Heart right ventricle (tissue), 16 donors: ENCODE measurements at regions of chr7 and their contacts with region 1.

Region 1: GRCh38 chr7:66654123-66654732 is 25.5 kb downstream of the KCTD7 start:
- DNase-seq: peak; percentile 98
- ATAC-seq: peak; percentile 97 to 99 (median 98)
- H3K4me3 ChIP-seq: peak overlapping the region; percentile 60 to 90 (median 82)
- H3K27ac ChIP-seq: peak overlapping the region; percentile 92 to 100 (median 98)
- H3K4me1 ChIP-seq: peaks cover 0 to 26% (median 20%) of the 10 kb centered on the region in 9 donors
- H3K27me3 ChIP-seq: no peaks in the 10 kb centered on the region
- CTCF ChIP-seq: peak in 6 of 9 donors; percentile 24 to 56 (median 40)

Region 2: GRCh38 chr7:66522518-66522917 is 131.7 kb before region 1 on chr7:
- intact Hi-C with region 1: no loop called
- DNase-seq: no peak
- ATAC-seq: peak in 6 of 8 donors; percentile 28 to 63 (median 44)
- H3K4me3 ChIP-seq: no peak overlapping the region
- H3K27ac ChIP-seq: no peak overlapping the region
- H3K4me1 ChIP-seq: no peaks in the 10 kb centered on the region
- H3K27me3 ChIP-seq: no peaks in the 10 kb centered on the region
- CTCF ChIP-seq: peak in 6 of 9 donors; percentile 16 to 31 (median 28)

Region 3: DNA sequence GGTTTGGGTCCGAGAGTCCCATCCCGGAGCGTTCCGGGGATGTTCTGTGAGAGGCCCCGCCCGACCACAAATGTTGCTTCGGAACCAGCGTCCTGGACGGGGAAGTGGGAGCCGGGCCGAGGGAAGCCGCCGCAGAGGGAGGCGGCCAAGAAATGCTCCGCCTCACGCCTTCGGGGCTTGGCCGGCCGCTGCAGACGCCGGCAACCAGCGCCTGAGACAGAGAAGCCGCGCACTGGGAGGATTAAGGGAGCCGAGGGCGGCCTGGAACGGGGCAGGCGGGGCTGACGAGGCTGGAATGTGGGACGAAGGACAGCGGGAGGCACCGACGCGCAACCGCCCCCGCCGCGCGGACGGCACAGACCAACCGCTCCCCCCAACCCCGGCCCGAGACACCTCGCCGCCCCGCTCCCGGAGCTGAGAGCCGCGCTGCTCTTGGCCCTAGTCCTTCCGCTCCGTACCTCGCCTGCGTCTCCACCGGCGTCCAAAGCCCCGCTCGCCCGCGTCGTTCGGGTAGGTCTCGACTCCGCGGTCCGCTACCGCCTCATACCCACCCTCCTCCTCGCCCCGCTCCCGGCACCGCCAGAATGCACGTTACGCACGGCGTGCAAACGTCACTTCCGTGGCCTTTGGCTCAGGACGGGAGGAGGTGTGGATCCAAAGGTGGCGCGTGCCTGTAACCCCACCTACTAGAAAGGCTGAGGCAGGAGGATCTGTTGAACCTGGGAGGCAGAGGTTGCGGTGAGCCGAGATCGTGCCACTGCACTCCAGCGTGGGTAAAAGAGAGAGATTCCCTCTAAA is 62.2 kb before region 1 on chr7:
- intact Hi-C with region 1: loop called in 1 of 10 experiments (anchors 10 kb)
- DNase-seq: peak; percentile 90 to 91
- ATAC-seq: peak; percentile 97 to 98 (median 98)
- H3K4me3 ChIP-seq: peak overlapping the region; percentile 68 to 98 (median 88)
- H3K27ac ChIP-seq: peak overlapping the region; percentile 84 to 97 (median 93)
- H3K4me1 ChIP-seq: peaks cover 0 to 47% (median 31%) of the 10 kb centered on the region in 9 donors
- H3K27me3 ChIP-seq: no peaks in the 10 kb centered on the region
- CTCF ChIP-seq: no peak

Region 4: GRCh38 chr7:66628361-66629140 is 25.7 kb before region 1 on chr7 and contains the start of gene KCTD7:
- intact Hi-C with region 1: loop called in 2 of 10 experiments (anchors 2 kb)
- DNase-seq: peak; percentile 98 to 99
- ATAC-seq: peak; percentile 95 to 98 (median 96)
- H3K4me3 ChIP-seq: peak within 1 kb of the TSS; percentile 49 to 95 (median 80)
- H3K27ac ChIP-seq: peak within 1 kb of the TSS; percentile 90 to 98 (median 96)
- H3K4me1 ChIP-seq: peaks cover 0 to 40% (median 19%) of the 10 kb centered on the region in 9 donors
- H3K27me3 ChIP-seq: no peaks in the 10 kb centered on the region
- CTCF ChIP-seq: no peak
- total RNA-seq, gene KCTD7: 7.3 to 13.6 (median 9.1) TPM

Region 5: DNA sequence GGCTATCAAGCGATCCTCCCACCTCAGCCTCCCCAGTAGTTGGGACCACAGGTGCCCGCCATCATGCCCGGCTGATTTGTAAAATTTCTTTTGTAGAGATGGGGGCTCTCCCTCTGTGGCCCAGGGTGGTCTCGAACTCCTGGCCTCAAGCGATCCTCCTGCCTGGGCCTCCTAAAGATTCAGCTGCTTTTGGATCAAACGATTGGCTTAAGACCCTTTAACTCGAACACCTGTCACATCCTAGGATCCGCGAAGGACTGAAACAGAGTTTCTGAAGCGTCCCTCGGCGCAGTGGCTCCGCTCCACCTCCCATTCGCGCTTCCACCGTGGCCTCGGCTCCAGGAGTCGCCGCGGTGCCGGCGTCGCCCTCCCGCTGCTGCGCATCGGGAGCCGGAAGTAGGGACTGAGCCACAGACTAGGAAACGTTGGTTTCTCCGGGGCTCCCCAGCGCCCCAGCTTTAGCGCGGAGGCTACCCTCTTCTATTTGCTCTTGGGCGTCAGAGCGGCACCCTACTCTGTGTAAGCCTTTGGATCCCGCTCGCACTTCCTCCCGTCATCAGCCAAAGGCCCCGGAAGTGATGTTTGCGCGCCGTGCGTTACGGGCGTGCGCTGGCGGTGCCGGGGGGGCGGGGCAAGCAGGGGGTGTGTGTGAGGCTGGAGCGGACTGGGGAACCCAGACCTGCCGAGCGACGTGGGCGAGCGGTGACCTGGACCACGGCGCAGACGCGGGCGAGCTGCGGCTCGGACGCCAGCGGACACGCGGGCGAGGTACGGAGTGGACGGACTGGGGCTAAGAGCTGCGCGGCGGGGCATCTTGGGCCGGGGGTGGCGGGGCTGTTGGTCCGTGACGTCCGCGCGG is 27.5 kb after region 1 on chr7:
- intact Hi-C with region 1: loop called in 3 of 10 experiments (anchors 1 to 2 kb)
- DNase-seq: peak; percentile 96 to 97
- ATAC-seq: peak; percentile 98 to 99 (median 99)
- H3K4me3 ChIP-seq: peak overlapping the region; percentile 65 to 98 (median 86)
- H3K27ac ChIP-seq: peak overlapping the region; percentile 74 to 99 (median 94)
- H3K4me1 ChIP-seq: peaks cover 0 to 40% (median 18%) of the 10 kb centered on the region in 9 donors
- H3K27me3 ChIP-seq: no peaks in the 10 kb centered on the region
- CTCF ChIP-seq: no peak

Region 6: DNA sequence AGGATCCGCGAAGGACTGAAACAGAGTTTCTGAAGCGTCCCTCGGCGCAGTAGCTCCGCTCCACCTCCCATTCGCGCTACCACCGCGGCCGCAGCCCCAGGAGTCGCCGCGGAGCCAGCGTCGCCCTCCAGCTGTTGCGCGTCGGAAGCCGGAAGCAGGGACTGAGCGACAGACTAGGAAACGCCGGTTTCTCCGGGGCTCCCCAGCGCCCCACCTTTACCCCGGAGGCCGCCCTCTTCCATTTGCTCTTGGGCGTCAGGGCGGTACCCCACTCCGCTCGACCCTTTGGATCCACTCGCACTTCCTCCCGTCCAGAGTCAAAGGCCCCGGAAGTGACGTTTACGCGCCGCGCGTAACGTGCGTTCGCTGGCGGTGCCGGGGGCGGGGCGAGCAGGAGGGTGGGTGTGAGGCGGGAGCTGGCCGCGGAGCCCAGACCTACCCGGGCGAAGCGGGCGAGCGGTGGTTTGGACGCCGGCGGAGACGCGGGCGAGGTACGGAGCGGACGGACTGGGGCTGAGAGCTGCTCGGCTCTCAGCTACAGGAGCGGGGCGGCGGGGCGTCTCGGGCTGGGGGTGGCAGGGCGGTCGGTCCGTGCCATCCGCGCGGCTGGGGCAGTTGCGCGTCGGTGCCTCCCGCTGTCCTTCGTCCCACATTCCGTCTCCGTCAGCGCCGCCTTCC is 86.2 kb after region 1 on chr7 and contains the start of gene RABGEF1:
- intact Hi-C with region 1: loop called in 3 of 10 experiments (anchors 2 to 10 kb)
- DNase-seq: peak; percentile 98
- ATAC-seq: peak; percentile 95 to 99 (median 98)
- H3K4me3 ChIP-seq: peak within 1 kb of the TSS; percentile 85 to 99 (median 98)
- H3K27ac ChIP-seq: peak within 1 kb of the TSS; percentile 86 to 99 (median 97)
- H3K4me1 ChIP-seq: peaks cover 2 to 36% (median 28%) of the 10 kb centered on the region in 9 donors
- H3K27me3 ChIP-seq: no peaks in the 10 kb centered on the region
- CTCF ChIP-seq: peak in 2 of 9 donors; percentile 15 to 17
- total RNA-seq, gene RABGEF1: 13.3 to 23.4 (median 17.4) TPM

Region 7: GRCh38 chr7:67653856-67654454 is 999.7 kb after region 1 on chr7:
- intact Hi-C with region 1: no loop called
- DNase-seq: peak in 1 of 2 donors; percentile 42
- ATAC-seq: peak; percentile 71 to 90 (median 82)
- H3K4me3 ChIP-seq: no peak overlapping the region
- H3K27ac ChIP-seq: peak overlapping the region in 2 of 10 donors; percentile 7 to 16
- H3K4me1 ChIP-seq: peaks cover 6 to 41% (median 20%) of the 10 kb centered on the region in 9 donors
- H3K27me3 ChIP-seq: peaks cover 0 to 17% (median 0%) of the 10 kb centered on the region in 7 donors
- CTCF ChIP-seq: no peak